ENCODE measurements at regions of chr11 and their contacts with region 1.

Region 1: GRCh38 chr11:126416542-126417090 is 61.1 kb downstream of the ST3GAL4 start:
- DNase-seq: peak; percentile 95
- H3K4me3 ChIP-seq: peak overlapping the region; percentile 54 to 65 (median 58)
- H3K27ac ChIP-seq: peak overlapping the region; percentile 83 to 90 (median 86)
- H3K4me1 ChIP-seq: peaks cover 37 to 75% (median 64%) of the 10 kb centered on the region in 4 donors
- H3K27me3 ChIP-seq: no peaks in the 10 kb centered on the region
- CTCF ChIP-seq: no peak
- EP300 ChIP-seq: no peak
- POLR2A ChIP-seq: no peak

Region 2: GRCh38 chr11:126332131-126332711 is 84.4 kb before region 1 on chr11:
- intact Hi-C with region 1: no loop called
- DNase-seq: no peak
- H3K4me3 ChIP-seq: no peak overlapping the region
- H3K27ac ChIP-seq: peak overlapping the region in 1 of 4 donors; percentile 13
- H3K4me1 ChIP-seq: peaks cover 24 to 33% (median 32%) of the 10 kb centered on the region in 4 donors
- H3K27me3 ChIP-seq: no peaks in the 10 kb centered on the region
- CTCF ChIP-seq: no peak
- EP300 ChIP-seq: no peak
- POLR2A ChIP-seq: no peak

Region 3: DNA sequence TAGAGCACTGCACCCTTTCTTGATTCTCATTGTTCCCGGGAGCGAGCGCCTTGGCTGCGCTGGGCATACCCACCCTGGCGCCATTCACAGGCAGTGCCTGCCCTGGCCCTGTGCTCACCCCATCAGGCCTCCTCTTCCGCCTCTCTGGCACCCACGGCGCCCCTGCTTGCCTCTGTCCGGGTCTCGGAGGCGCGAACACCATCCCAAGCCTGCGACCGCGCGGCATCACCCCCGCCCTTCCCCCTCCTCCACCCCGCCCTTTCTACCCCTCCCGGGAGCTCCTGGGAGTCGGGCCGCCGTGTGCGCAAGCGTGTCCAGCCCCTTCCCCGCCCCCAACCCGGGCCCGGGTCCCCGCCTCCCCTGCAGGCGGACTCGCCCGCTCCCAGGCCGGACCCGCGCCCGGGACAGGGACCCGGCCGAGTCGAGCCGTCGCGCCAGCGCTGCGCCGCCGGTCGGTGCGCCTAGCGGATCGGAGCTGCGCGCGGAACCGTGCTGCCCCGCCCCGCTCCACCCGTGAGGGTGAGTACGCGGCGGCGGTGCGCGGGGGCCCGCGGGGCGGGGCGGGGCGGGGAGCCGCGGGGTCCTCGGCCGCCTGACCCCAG is 61.2 kb before region 1 on chr11 and contains the start of gene ST3GAL4:
- intact Hi-C with region 1: loop called (anchors 5 kb)
- DNase-seq: no peak
- H3K4me3 ChIP-seq: peak within 1 kb of the TSS; percentile 62 to 88 (median 78)
- H3K27ac ChIP-seq: peak within 1 kb of the TSS; percentile 85 to 89 (median 86)
- H3K4me1 ChIP-seq: peaks cover 71 to 94% (median 92%) of the 10 kb centered on the region in 4 donors
- H3K27me3 ChIP-seq: no peaks in the 10 kb centered on the region
- CTCF ChIP-seq: no peak
- EP300 ChIP-seq: no peak
- POLR2A ChIP-seq: no peak
- total RNA-seq, gene ST3GAL4: 40.0 to 52.4 (median 40.5) TPM

Measured in esophagus muscularis mucosa (tissue), 4 donors.